ENCODE measurements at regions of chr15 and their contacts with region 1.

Region 1: DNA sequence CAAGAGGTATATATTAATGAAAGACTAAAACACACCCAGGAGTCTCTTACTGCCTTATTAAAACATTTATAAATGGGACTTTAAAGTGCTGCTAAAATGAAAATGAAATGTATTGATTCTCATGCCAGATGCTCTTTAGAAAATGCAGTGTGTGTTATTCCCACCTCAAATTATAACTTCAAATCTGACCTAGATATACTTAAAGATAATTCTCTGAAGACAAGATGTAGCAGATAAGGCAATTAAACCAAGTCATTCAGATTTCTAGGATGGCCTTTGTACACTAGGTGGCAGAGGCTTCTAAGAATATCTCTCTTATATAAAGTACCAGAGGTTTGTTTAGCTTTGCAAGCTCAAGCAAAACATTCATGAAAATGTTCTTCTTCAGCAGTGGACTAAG is 26.9 kb upstream of the GOLGA8B start:
- DNase-seq: no peak
- H3K4me3 ChIP-seq: no peak overlapping the region
- CTCF ChIP-seq: peak; percentile 5

Region 2: DNA sequence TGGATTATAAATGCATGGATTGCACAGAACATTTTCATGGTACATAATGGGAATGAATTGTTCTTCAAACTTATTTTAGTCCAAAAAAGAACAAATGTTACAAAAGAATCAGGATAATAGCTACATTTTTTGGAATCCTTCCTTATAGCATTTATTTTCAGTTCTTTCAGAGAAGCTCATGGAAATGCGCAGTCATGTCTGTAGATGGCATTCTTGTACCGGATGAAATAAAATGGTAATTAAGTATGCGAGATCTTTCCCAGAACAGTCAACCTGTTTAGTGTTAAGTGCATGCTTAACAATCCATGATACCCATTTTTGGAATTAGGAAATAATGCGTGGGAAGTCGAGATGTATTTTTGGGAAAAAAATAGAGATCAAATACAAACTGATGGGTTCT is 11.3 kb after region 1 on chr15:
- CTCF ChIA-PET with region 1: interaction called, 10 read pairs
- POLR2A ChIA-PET with region 1: no interaction called
- DNase-seq: no peak
- H3K4me3 ChIP-seq: no peak overlapping the region
- CTCF ChIP-seq: peak; percentile 28

Region 3: DNA sequence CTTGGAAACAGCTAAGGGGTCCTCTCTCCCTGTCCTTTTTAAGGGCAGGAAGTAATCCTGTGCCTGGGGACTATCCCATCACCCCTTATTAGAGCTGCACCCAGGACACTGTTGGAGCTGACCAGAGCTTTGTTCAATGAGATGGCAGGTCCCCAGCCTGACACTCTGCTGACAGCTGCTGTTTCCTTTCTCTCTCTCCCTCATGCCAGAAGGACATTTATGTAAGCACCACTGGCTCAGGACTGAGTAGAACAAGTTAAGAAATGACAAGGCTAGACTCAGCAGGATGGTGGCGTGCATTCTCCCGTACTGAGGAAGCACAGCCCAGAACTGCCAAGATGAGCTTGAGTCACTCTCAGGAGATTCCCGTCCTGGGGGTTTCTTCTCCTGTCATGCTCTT is 127.1 kb after region 1 on chr15:
- CTCF ChIA-PET with region 1: no interaction called
- POLR2A ChIA-PET with region 1: no interaction called
- DNase-seq: no peak
- H3K4me3 ChIP-seq: no peak overlapping the region
- CTCF ChIP-seq: no peak

Measured in AG04449 (cell line).